ENCODE measurements at regions of chr11 and their contacts with region 1.

Region 1: GRCh38 chr11:48244804-48245203 is at the start of gene OR4X2:
- DNase-seq: no peak
- ATAC-seq: no peak
- H3K4me3 ChIP-seq: no peak within 1 kb of the TSS
- H3K4me3 Mint-ChIP-seq: no peak within 1 kb of the TSS
- H3K27ac ChIP-seq: no peak within 1 kb of the TSS
- H3K27ac Mint-ChIP-seq: no peak within 1 kb of the TSS
- H3K4me1 ChIP-seq: no peaks in the 10 kb centered on the region
- H3K4me1 Mint-ChIP-seq: no peaks in the 10 kb centered on the region
- H3K27me3 ChIP-seq: peaks cover 0 to 13% of the 10 kb centered on the region in 2 experiments
- H3K27me3 Mint-ChIP-seq: peaks cover 17 to 30% of the 10 kb centered on the region in 2 donors
- total RNA-seq, gene OR4X2: not detected

Region 2: GRCh38 chr11:46874586-46874985 is 1370.2 kb before region 1 on chr11:
- CTCF ChIA-PET with region 1: no interaction called
- POLR2A ChIA-PET with region 1: no interaction called
- DNase-seq: no peak
- ATAC-seq: no peak
- H3K4me3 ChIP-seq: no peak overlapping the region
- H3K4me3 Mint-ChIP-seq: no peak overlapping the region
- H3K27ac ChIP-seq: no peak overlapping the region
- H3K27ac Mint-ChIP-seq: no peak overlapping the region
- H3K4me1 ChIP-seq: no peaks in the 10 kb centered on the region
- H3K4me1 Mint-ChIP-seq: no peaks in the 10 kb centered on the region
- H3K27me3 ChIP-seq: peaks cover 0 to 28% of the 10 kb centered on the region in 2 experiments
- H3K27me3 Mint-ChIP-seq: peaks cover 5 to 7% of the 10 kb centered on the region in 2 donors

Region 3: DNA sequence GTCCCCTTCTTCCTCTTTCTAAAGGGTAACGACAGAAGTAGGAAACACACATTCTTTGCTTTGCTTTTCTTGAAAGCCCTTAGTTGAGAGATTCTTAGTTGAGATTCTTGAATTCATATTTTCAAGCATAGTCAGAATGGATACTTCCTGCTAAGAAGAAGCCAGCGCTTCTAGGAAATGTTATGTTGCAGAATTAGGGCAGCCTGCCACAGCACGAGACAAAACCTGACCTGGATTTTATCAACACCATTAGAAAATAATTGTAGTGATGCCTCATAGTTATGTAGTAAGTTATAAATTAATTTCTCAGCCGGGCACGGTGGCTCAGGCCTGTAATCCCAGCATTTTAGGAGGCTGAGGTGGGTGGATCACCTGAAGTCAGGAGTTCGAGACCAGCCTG is 358.7 kb before region 1 on chr11:
- CTCF ChIA-PET with region 1: no interaction called
- POLR2A ChIA-PET with region 1: no interaction called
- DNase-seq: peak in 13 of 35 experiments; percentile 4 to 20 (median 10)
- ATAC-seq: peak; percentile 56 to 75 (median 67)
- H3K4me3 ChIP-seq: no peak overlapping the region
- H3K4me3 Mint-ChIP-seq: peak overlapping the region in 2 of 3 donors; percentile 49 to 62
- H3K27ac ChIP-seq: peak overlapping the region; percentile 76
- H3K27ac Mint-ChIP-seq: peak overlapping the region; percentile 96 to 98
- H3K4me1 ChIP-seq: peaks cover 34 to 38% of the 10 kb centered on the region in 2 experiments
- H3K4me1 Mint-ChIP-seq: peaks cover 51 to 64% (median 52%) of the 10 kb centered on the region in 3 donors
- H3K27me3 ChIP-seq: no peaks in the 10 kb centered on the region
- H3K27me3 Mint-ChIP-seq: no peaks in the 10 kb centered on the region

Region 4: DNA sequence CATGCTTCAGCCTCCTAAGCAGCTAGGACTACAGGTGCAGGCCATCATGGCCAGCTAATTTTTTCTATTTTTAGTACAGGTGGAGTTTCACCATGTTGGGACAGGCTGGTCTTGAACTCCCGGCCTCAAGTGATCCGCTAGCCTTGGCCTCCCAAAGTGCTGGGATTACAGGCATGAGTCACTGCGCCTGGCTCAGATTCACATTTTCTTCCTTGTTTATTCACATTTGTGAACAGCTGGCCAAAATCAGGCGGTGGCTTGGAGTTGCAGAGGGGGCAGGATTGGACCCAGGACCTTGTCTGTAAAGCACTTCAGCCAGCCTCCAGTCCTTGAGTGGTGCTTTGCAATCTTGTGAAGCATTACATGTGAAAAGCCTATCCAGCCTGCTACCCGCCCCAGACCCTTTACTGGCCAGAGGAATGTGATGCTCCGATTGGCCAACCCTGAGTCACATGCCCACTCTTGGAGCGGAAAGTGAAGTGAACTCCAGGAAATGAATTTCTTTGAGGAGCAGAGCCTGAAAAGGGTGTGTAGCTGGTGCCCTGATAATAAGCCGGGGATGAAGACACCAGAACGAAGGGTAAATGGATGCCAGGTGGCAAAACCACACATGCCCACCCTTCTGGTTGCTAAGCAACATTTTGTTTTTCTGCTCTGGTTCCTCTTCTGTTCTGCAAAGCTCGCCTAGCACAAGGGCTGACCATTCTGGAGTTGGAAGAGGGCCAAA is 327.0 kb before region 1 on chr11:
- CTCF ChIA-PET with region 1: no interaction called
- POLR2A ChIA-PET with region 1: interaction called in 1 of 2 experiments, 15 read pairs
- DNase-seq: peak in 21 of 35 experiments; percentile 8 to 49 (median 19)
- ATAC-seq: peak in 1 of 4 experiments; percentile 47
- H3K4me3 ChIP-seq: no peak overlapping the region
- H3K4me3 Mint-ChIP-seq: no peak overlapping the region
- H3K27ac ChIP-seq: peak overlapping the region; percentile 39
- H3K27ac Mint-ChIP-seq: peak overlapping the region; percentile 78 to 94
- H3K4me1 ChIP-seq: peaks cover 28 to 65% of the 10 kb centered on the region in 2 experiments
- H3K4me1 Mint-ChIP-seq: peaks cover 50 to 81% (median 73%) of the 10 kb centered on the region in 3 donors
- H3K27me3 ChIP-seq: no peaks in the 10 kb centered on the region
- H3K27me3 Mint-ChIP-seq: no peaks in the 10 kb centered on the region

Measured in T-cell (primary cell).